ENCODE measurements at regions of chr15 and their contacts with region 1.

Region 1: GRCh38 chr15:63986751-63987341 is 59.4 kb downstream of the DAPK2 start:
- DNase-seq: peak; percentile 67
- CTCF ChIP-seq: no peak

Region 2: GRCh38 chr15:63860155-63860554 is 126.7 kb before region 1 on chr15:
- CTCF ChIA-PET with region 1: no interaction called
- POLR2A ChIA-PET with region 1: no interaction called
- DNase-seq: no peak
- CTCF ChIP-seq: no peak

Region 3: DNA sequence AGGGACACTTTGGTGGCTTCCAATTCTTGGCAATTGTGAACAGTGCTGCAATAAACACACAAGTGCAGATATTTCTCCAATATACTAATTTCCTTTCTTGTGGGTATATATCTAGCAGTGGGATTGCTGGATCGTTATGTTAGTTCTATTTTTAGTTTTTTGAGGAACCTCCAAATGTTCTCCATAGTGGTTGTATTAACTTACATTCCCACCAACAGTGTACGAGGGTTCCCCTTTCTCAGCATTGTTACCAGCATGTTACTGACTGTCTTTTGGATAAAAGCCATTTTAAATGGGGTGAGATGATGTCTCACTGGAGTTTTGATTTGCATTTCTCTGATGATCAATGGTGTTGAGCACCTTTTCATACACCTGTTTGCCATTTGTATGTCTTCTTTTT is 33.3 kb before region 1 on chr15:
- CTCF ChIA-PET with region 1: no interaction called
- POLR2A ChIA-PET with region 1: no interaction called
- DNase-seq: no peak
- CTCF ChIP-seq: no peak

Region 4: GRCh38 chr15:63970621-63971426 is 16.0 kb before region 1 on chr15:
- CTCF ChIA-PET with region 1: interaction called, 92 read pairs
- POLR2A ChIA-PET with region 1: interaction called, 7 read pairs
- DNase-seq: peak; percentile 78
- CTCF ChIP-seq: no peak

Region 5: GRCh38 chr15:64004582-64004981 is 17.7 kb after region 1 on chr15:
- CTCF ChIA-PET with region 1: interaction called, 24 read pairs
- POLR2A ChIA-PET with region 1: no interaction called
- DNase-seq: no peak
- CTCF ChIP-seq: no peak

Region 6: GRCh38 chr15:64010719-64011118 is 23.9 kb after region 1 on chr15:
- CTCF ChIA-PET with region 1: interaction called, 24 read pairs
- POLR2A ChIA-PET with region 1: no interaction called
- DNase-seq: peak; percentile 79
- CTCF ChIP-seq: peak; percentile 40